ENCODE measurements at regions of chr1 and their contacts with region 1.

Region 1: DNA sequence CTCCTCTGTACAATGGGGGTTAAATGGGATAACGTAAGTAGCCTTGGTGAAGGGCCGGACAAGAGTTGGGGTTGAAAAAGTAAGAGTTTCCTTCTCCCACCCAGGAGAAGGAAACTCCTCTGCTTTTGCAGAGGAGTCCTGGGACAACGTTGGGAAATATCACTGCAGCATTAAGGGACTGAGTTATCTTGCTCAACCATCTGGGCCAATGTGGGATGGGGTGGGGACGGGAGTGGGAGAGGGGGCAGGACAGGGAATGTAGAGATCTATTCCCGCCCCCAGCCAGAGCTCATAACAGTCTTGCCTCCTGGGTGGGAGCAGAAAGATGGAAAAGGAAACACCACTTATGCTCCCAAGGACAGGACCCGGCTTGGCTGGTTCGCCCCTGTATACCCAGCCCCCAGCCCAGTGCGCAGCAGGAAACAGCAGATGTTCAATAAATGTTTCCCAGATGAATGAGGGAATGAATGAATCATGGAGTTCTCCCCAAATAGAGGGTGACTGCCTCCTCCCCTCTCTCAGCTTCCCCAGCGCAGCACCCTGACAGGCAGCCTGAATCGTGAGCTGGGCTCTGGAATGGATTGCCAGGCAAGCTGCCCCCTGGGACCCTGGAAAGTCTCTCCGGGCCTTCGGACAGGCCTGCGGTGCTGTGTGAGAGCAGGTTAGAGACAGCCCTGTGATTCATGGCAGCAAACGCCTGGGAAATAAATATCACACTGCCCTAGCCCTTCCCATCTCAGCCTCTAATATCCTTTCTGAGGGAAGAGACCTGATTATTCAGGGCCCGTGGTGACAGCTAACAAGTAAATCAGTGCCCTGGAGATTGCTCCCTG is 24.8 kb downstream of the FBXO2 start:
- DNase-seq: no peak
- H3K4me3 ChIP-seq: no peak overlapping the region
- H3K27ac ChIP-seq: no peak overlapping the region
- H3K4me1 ChIP-seq: no peaks in the 10 kb centered on the region
- H3K27me3 ChIP-seq: peaks cover 3% of the 10 kb centered on the region

Region 2: DNA sequence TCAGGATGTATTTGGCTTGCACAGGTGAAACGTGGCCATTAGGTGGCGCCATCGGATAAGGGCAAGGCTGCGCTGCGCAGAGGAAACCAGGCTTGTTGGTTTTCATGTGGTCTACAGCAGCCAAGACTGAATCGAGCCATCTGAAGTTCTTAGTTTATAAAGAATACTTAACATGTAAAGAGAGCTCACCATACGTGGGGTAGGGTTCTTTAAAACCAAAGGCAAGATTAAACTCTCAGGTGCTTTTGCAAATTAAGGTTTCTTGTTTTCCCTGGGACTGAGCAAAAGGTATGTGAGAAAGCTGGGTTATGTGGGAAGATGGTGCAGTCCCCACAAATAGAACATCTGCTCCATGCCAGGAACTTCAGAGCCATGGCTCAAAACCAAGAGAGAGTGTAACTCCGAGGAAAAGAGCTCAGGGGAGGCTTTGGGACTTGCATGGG is 591.6 kb before region 1 on chr1:
- in situ Hi-C with region 1: loop called (anchors 10 kb)
- DNase-seq: peak; percentile 86
- H3K4me3 ChIP-seq: no peak overlapping the region
- H3K27ac ChIP-seq: no peak overlapping the region
- H3K4me1 ChIP-seq: no peaks in the 10 kb centered on the region
- H3K27me3 ChIP-seq: no peaks in the 10 kb centered on the region

Region 3: GRCh38 chr1:11248155-11248554 is 381.2 kb before region 1 on chr1:
- in situ Hi-C with region 1: loop called (anchors 10 kb)
- DNase-seq: no peak
- H3K4me3 ChIP-seq: no peak overlapping the region
- H3K27ac ChIP-seq: no peak overlapping the region
- H3K4me1 ChIP-seq: no peaks in the 10 kb centered on the region
- H3K27me3 ChIP-seq: no peaks in the 10 kb centered on the region

Measured in GM23248 (cell line).